ENCODE measurements at regions of chr17 and their contacts with region 1.

Region 1: GRCh38 chr17:2336215-2336851 is at the start of gene TSR1:
- DNase-seq: peak; percentile 68 to 94 (median 89)
- ATAC-seq: peak; percentile 80
- H3K4me3 ChIP-seq: peak within 1 kb of the TSS; percentile 77 to 88
- H3K4me3 Mint-ChIP-seq: peak within 1 kb of the TSS; percentile 98
- H3K27ac ChIP-seq: peak within 1 kb of the TSS; percentile 78 to 80
- H3K27ac Mint-ChIP-seq: peak within 1 kb of the TSS; percentile 95
- H3K4me1 ChIP-seq: peaks cover 16% of the 10 kb centered on the region
- H3K4me1 Mint-ChIP-seq: peaks cover 31% of the 10 kb centered on the region
- H3K27me3 ChIP-seq: no peaks in the 10 kb centered on the region
- H3K27me3 Mint-ChIP-seq: no peaks in the 10 kb centered on the region
- CTCF ChIP-seq: peak; percentile 24
- total RNA-seq, gene TSR1: 36.5 to 39.6 TPM

Region 2: DNA sequence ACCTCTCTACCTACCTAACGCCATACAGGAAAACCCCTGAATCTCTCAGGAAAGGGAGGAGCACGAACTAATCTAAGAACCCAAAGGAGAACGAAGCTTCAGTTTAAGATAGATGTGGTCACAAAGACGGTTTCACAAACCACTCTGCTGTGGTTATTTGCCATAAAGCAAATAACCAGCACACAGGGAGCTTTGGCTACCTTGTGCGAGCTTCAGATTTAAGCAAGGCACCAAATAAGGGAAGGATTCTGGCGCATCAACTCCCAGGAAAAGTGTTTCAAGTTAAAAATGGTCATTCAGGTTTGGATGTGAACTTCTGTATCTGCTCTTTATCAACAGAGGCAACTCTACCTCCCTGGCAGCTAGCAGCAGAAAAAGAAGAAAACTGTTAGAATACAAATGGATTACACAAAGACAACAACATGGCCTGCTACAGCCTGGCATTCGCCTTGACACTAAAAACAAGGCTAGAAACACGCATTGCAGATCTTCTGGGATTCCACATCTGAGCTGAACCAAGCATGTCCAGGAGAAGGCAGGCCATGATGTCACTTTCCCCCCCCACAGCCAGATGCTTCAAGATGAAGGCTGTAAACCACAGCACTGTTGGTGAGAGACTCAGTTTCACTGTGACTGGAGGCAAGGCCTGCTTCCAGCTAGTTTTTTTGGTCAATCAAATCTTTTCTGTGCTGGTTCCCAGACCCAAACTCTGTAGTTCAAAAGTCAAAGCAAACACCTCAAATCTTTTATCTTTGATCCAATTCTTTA is 76.4 kb before region 1 on chr17:
- CTCF ChIA-PET with region 1: no interaction called
- POLR2A ChIA-PET with region 1: interaction called, 3 read pairs
- intact Hi-C with region 1: loop called in 1 of 2 experiments (anchors 5 kb)
- DNase-seq: peak; percentile 7 to 87 (median 61)
- ATAC-seq: peak; percentile 55
- H3K4me3 ChIP-seq: peak overlapping the region in 1 of 2 experiments; percentile 21
- H3K4me3 Mint-ChIP-seq: peak overlapping the region; percentile 59
- H3K27ac ChIP-seq: peak overlapping the region; percentile 43 to 74
- H3K27ac Mint-ChIP-seq: peak overlapping the region; percentile 95
- H3K4me1 ChIP-seq: peaks cover 67% of the 10 kb centered on the region
- H3K4me1 Mint-ChIP-seq: peaks cover 69% of the 10 kb centered on the region
- H3K27me3 ChIP-seq: no peaks in the 10 kb centered on the region
- H3K27me3 Mint-ChIP-seq: no peaks in the 10 kb centered on the region
- CTCF ChIP-seq: no peak

Region 3: DNA sequence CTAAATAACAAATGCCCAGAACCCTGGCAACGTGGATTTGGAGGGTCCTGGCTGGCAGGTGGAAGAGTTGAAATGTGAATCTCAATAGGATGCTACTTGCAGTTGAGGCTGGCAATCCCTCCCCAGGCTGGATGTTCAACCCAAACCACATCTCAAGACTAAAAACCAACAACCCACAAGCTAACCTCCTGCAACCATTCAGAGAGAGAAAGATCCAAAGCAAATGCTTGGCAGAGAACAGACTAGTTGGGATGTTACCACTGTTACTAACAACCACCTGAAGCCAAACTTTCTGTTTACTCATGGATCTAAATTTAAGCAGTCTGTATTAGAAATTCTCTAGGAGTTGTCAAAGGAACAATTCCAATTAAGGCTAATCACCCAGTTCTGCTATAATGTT is 60.6 kb before region 1 on chr17:
- CTCF ChIA-PET with region 1: no interaction called
- POLR2A ChIA-PET with region 1: no interaction called
- intact Hi-C with region 1: no loop called
- DNase-seq: peak in 1 of 9 experiments; percentile 59
- ATAC-seq: peak; percentile 56
- H3K4me3 ChIP-seq: no peak overlapping the region
- H3K4me3 Mint-ChIP-seq: peak overlapping the region; percentile 30
- H3K27ac ChIP-seq: peak overlapping the region in 1 of 2 experiments; percentile 30
- H3K27ac Mint-ChIP-seq: peak overlapping the region; percentile 58
- H3K4me1 ChIP-seq: peaks cover 37% of the 10 kb centered on the region
- H3K4me1 Mint-ChIP-seq: peaks cover 52% of the 10 kb centered on the region
- H3K27me3 ChIP-seq: no peaks in the 10 kb centered on the region
- H3K27me3 Mint-ChIP-seq: no peaks in the 10 kb centered on the region
- CTCF ChIP-seq: no peak

Region 4: GRCh38 chr17:2303204-2304188 is 32.8 kb before region 1 on chr17 and contains the starts of genes SMG6 and SRR:
- CTCF ChIA-PET with region 1: interaction called, 3 read pairs
- POLR2A ChIA-PET with region 1: interaction called, 10 read pairs
- intact Hi-C with region 1: loop called (anchors 1 kb)
- DNase-seq: peak; percentile 89 to 98 (median 95)
- ATAC-seq: peak; percentile 91
- H3K4me3 ChIP-seq: peak within 1 kb of the TSS; percentile 95 to 98
- H3K4me3 Mint-ChIP-seq: peak within 1 kb of the TSS; percentile 93
- H3K27ac ChIP-seq: peak within 1 kb of the TSS; percentile 76 to 85
- H3K27ac Mint-ChIP-seq: peak within 1 kb of the TSS; percentile 91
- H3K4me1 ChIP-seq: peaks cover 18% of the 10 kb centered on the region
- H3K4me1 Mint-ChIP-seq: peaks cover 43% of the 10 kb centered on the region
- H3K27me3 ChIP-seq: no peaks in the 10 kb centered on the region
- H3K27me3 Mint-ChIP-seq: no peaks in the 10 kb centered on the region
- CTCF ChIP-seq: no peak
- total RNA-seq, gene SMG6: 36.1 to 37.8 TPM
- total RNA-seq, gene SRR: 1.8 to 2.9 TPM

Region 5: DNA sequence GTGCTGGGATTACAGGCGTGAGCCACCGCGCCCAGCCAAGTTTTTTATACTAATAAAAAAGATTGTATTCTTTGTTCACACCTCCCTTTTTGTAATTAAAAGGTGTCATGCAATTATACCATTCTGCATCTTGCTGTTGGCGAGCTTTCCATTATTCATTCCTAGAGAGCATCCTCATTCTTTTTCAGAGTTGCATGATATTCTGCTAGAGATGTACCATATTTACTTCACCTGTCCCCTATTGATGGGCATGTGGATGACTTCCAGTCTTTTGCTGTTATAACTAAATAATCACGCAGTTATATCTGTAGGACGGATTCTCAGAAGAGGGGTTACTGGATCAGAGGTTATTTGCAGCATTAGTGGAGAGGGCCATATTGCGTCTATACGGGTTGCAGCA is 18.0 kb after region 1 on chr17:
- CTCF ChIA-PET with region 1: interaction called, 29 read pairs
- POLR2A ChIA-PET with region 1: interaction called, 9 read pairs
- intact Hi-C with region 1: loop called (anchors 1 kb)
- DNase-seq: no peak
- ATAC-seq: no peak
- H3K4me3 ChIP-seq: no peak overlapping the region
- H3K4me3 Mint-ChIP-seq: no peak overlapping the region
- H3K27ac ChIP-seq: no peak overlapping the region
- H3K27ac Mint-ChIP-seq: peak overlapping the region; percentile 92
- H3K4me1 ChIP-seq: peaks cover 19% of the 10 kb centered on the region
- H3K4me1 Mint-ChIP-seq: peaks cover 19% of the 10 kb centered on the region
- H3K27me3 ChIP-seq: no peaks in the 10 kb centered on the region
- H3K27me3 Mint-ChIP-seq: no peaks in the 10 kb centered on the region
- CTCF ChIP-seq: no peak

Region 6: GRCh38 chr17:2369551-2370210 is 33.3 kb after region 1 on chr17:
- CTCF ChIA-PET with region 1: no interaction called
- POLR2A ChIA-PET with region 1: no interaction called
- intact Hi-C with region 1: no loop called
- DNase-seq: peak in 1 of 9 experiments; percentile 3
- ATAC-seq: no peak
- H3K4me3 ChIP-seq: no peak overlapping the region
- H3K4me3 Mint-ChIP-seq: no peak overlapping the region
- H3K27ac ChIP-seq: no peak overlapping the region
- H3K27ac Mint-ChIP-seq: no peak overlapping the region
- H3K4me1 ChIP-seq: no peaks in the 10 kb centered on the region
- H3K4me1 Mint-ChIP-seq: no peaks in the 10 kb centered on the region
- H3K27me3 ChIP-seq: no peaks in the 10 kb centered on the region
- H3K27me3 Mint-ChIP-seq: no peaks in the 10 kb centered on the region
- CTCF ChIP-seq: no peak

Region 7: DNA sequence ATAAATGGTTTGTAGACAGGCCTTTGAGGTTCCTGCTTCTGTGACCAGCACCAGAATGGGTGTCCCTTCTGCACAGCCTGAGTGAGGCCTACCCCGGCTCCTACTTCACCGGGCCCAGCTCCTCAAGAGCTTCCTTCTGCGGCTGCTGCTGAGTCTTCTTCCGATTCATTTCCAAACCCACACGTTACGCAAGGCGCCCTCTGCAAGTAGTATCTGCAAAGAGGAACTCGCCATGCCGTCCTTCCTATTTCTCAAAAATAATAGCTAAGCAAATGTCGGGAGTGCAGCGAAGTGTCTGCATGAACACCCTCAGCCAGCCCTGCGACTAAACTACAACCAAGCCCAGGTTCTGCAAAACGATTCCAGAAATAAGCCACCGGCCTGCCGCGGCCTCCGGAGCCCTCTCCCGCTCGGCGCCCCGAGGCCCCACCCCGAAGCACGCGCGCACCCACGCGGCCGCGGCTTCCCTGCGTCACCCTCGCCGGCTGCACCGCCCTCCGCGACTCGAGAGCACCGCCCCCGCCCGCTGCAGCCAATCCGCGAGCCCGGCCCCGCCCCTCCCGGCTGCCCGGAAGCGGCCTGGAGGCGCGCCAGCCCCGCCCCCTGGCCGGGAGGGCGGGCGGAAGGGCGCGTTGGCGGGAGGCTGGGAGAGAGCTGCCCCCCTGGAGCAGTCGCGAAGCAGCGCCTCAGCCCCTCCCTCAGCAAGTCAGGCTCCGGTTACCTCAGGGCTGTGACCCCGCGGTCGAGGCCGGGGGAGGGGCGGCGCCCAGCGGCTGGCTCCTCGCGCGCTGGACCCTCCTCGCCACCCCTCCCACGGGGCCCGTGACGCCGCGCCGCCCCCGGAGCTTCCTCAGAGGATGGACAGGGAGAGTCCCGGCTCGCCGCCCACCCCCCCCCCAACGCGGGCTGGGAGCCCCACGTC is 56.2 kb after region 1 on chr17:
- CTCF ChIA-PET with region 1: no interaction called
- POLR2A ChIA-PET with region 1: interaction called, 4 read pairs
- intact Hi-C with region 1: loop called in 1 of 2 experiments (anchors 2 kb)
- DNase-seq: peak; percentile 95 to 99 (median 97)
- ATAC-seq: peak; percentile 66
- H3K4me3 ChIP-seq: peak overlapping the region; percentile 83 to 95
- H3K4me3 Mint-ChIP-seq: peak overlapping the region; percentile 91
- H3K27ac ChIP-seq: peak overlapping the region; percentile 95 to 100
- H3K27ac Mint-ChIP-seq: peak overlapping the region; percentile 97
- H3K4me1 ChIP-seq: peaks cover 53% of the 10 kb centered on the region
- H3K4me1 Mint-ChIP-seq: peaks cover 50% of the 10 kb centered on the region
- H3K27me3 ChIP-seq: no peaks in the 10 kb centered on the region
- H3K27me3 Mint-ChIP-seq: no peaks in the 10 kb centered on the region
- CTCF ChIP-seq: no peak

Region 8: GRCh38 chr17:2511462-2512369 is 175.4 kb after region 1 on chr17 and contains the start of gene METTL16:
- CTCF ChIA-PET with region 1: no interaction called
- POLR2A ChIA-PET with region 1: no interaction called
- intact Hi-C with region 1: loop called in 1 of 2 experiments (anchors 2 kb)
- DNase-seq: peak; percentile 92 to 99 (median 96)
- ATAC-seq: peak; percentile 97
- H3K4me3 ChIP-seq: peak within 1 kb of the TSS; percentile 81 to 84
- H3K4me3 Mint-ChIP-seq: no peak within 1 kb of the TSS
- H3K27ac ChIP-seq: peak within 1 kb of the TSS; percentile 96 to 97
- H3K27ac Mint-ChIP-seq: no peak within 1 kb of the TSS
- H3K4me1 ChIP-seq: peaks cover 35% of the 10 kb centered on the region
- H3K4me1 Mint-ChIP-seq: peaks cover 21% of the 10 kb centered on the region
- H3K27me3 ChIP-seq: no peaks in the 10 kb centered on the region
- H3K27me3 Mint-ChIP-seq: no peaks in the 10 kb centered on the region
- CTCF ChIP-seq: no peak
- total RNA-seq, gene METTL16: 59.8 to 69.5 TPM

Region 9: GRCh38 chr17:2700516-2701141 is 364.3 kb after region 1 on chr17:
- CTCF ChIA-PET with region 1: no interaction called
- POLR2A ChIA-PET with region 1: no interaction called
- intact Hi-C with region 1: no loop called
- DNase-seq: no peak
- ATAC-seq: no peak
- H3K4me3 ChIP-seq: no peak overlapping the region
- H3K4me3 Mint-ChIP-seq: no peak overlapping the region
- H3K27ac ChIP-seq: no peak overlapping the region
- H3K27ac Mint-ChIP-seq: no peak overlapping the region
- H3K4me1 ChIP-seq: no peaks in the 10 kb centered on the region
- H3K4me1 Mint-ChIP-seq: peaks cover 4% of the 10 kb centered on the region
- H3K27me3 ChIP-seq: no peaks in the 10 kb centered on the region
- H3K27me3 Mint-ChIP-seq: no peaks in the 10 kb centered on the region
- CTCF ChIP-seq: no peak

Region 10: GRCh38 chr17:2711601-2712299 is 375.4 kb after region 1 on chr17 and contains the start of gene CLUH:
- CTCF ChIA-PET with region 1: no interaction called
- POLR2A ChIA-PET with region 1: no interaction called
- intact Hi-C with region 1: loop called in 1 of 2 experiments (anchors 1 kb)
- DNase-seq: peak; percentile 90 to 98 (median 94)
- ATAC-seq: peak; percentile 93
- H3K4me3 ChIP-seq: peak within 1 kb of the TSS; percentile 64 to 84
- H3K4me3 Mint-ChIP-seq: peak within 1 kb of the TSS; percentile 88
- H3K27ac ChIP-seq: peak within 1 kb of the TSS; percentile 41 to 47
- H3K27ac Mint-ChIP-seq: peak within 1 kb of the TSS; percentile 77
- H3K4me1 ChIP-seq: peaks cover 45% of the 10 kb centered on the region
- H3K4me1 Mint-ChIP-seq: peaks cover 35% of the 10 kb centered on the region
- H3K27me3 ChIP-seq: no peaks in the 10 kb centered on the region
- H3K27me3 Mint-ChIP-seq: no peaks in the 10 kb centered on the region
- CTCF ChIP-seq: no peak
- total RNA-seq, gene CLUH: 50.8 to 51.1 TPM

Region 11: DNA sequence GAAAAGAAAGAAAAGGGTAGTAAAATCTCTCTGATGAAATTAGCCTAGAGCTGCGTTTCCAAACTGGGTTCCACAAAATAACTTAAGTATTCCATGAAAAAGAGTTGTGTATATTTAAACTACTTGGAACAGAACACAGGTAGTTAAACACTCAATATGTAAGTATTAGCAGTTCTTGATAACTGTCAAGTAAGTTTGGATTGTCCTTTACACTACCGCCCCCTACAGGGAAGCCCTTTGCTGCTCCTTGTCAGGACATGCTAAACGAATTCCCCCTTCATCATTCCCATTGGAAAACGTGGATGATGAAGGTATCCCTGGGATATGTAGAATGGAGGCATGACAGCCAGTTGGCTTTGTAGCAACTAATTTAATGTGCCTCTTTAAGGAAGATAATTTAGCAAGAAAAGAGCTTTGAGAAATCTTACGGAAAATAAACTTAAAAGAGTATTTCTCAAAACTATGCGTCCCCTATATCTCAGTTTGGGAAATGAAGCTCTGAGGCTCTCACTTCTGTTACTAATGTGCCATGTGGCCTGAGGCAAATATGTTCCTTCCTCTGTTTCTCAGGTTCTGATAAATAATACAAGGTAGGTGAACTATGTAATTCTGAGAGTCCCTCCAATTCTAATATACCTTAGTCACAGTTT is 1490.9 kb after region 1 on chr17:
- CTCF ChIA-PET with region 1: no interaction called
- POLR2A ChIA-PET with region 1: no interaction called
- intact Hi-C with region 1: no loop called
- DNase-seq: peak; percentile 50 to 85 (median 79)
- ATAC-seq: peak; percentile 80
- H3K4me3 ChIP-seq: no peak overlapping the region
- H3K4me3 Mint-ChIP-seq: no peak overlapping the region
- H3K27ac ChIP-seq: no peak overlapping the region
- H3K27ac Mint-ChIP-seq: no peak overlapping the region
- H3K4me1 ChIP-seq: no peaks in the 10 kb centered on the region
- H3K4me1 Mint-ChIP-seq: peaks cover 2% of the 10 kb centered on the region
- H3K27me3 ChIP-seq: no peaks in the 10 kb centered on the region
- H3K27me3 Mint-ChIP-seq: no peaks in the 10 kb centered on the region
- CTCF ChIP-seq: peak; percentile 96

Measured in CD8-positive, alpha-beta T cell (primary cell).